B cell (primary cell): ENCODE measurements at regions of chr7 and their contacts with region 1.

Region 1: GRCh38 chr7:108569381-108570145 is at the starts of genes DNAJB9 and THAP5:
- DNase-seq: peak; percentile 100
- ATAC-seq: peak; percentile 87
- H3K4me3 ChIP-seq: peak within 1 kb of the TSS; percentile 79 to 92 (median 89)
- H3K4me3 Mint-ChIP-seq: peak within 1 kb of the TSS; percentile 96
- H3K27ac ChIP-seq: peak within 1 kb of the TSS; percentile 99 to 100
- H3K27ac Mint-ChIP-seq: peak within 1 kb of the TSS; percentile 98
- H3K4me1 ChIP-seq: peaks cover 16 to 39% of the 10 kb centered on the region in 2 donors
- H3K4me1 Mint-ChIP-seq: peaks cover 51% of the 10 kb centered on the region
- H3K27me3 ChIP-seq: no peaks in the 10 kb centered on the region
- H3K27me3 Mint-ChIP-seq: no peaks in the 10 kb centered on the region
- CTCF ChIP-seq: no peak
- total RNA-seq, gene DNAJB9: 19.5 and 21.1 TPM in 2 replicates
- total RNA-seq, gene THAP5: 48.8 and 49.0 TPM in 2 replicates

Region 2: DNA sequence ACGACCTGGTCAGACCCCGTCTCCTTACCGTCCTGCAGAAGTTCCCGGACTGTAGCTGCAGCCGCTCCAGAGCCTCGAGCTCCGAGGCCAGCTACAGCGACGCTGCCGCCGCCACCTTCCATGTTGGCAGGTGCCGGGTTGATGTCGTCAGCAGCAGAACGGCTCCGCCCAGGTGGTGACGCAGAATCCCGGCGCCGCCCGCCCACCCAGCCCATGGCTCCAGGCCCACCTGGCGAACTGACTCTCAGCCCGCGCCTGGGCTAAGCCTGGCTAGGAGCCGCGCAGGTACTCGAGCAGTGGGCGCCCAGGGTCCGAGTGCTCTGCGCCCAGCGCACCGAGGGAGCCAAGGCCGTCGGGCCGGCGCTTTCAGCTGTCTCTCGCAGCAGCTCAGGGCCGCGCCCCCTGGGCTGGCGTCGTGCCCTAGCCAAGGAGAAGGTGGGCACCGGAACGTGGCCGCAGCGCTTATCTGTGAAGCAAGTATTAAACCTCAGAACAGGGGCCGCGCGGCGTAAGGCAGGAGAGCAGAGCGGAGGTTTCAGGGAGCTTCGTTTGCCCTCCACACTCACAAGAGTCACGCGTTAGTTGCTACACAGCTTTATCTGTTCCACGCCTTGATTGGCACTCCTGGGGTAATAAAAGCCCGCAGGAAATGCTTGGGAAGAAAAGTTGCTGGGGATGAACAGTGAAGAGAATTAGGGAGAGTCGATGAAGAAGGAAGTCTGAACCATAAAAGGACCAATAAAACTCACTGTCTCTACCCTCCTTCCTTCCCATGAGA is 1005.6 kb before region 1 on chr7 and contains the starts of genes COG5 and DUS4L:
- CTCF ChIA-PET with region 1: no interaction called
- POLR2A ChIA-PET with region 1: no interaction called
- intact Hi-C with region 1: loop called (anchors 5 kb)
- DNase-seq: peak; percentile 92
- ATAC-seq: peak; percentile 93
- H3K4me3 ChIP-seq: peak within 1 kb of the TSS; percentile 86 to 98 (median 93)
- H3K4me3 Mint-ChIP-seq: peak within 1 kb of the TSS; percentile 88
- H3K27ac ChIP-seq: peak within 1 kb of the TSS; percentile 88 to 94
- H3K27ac Mint-ChIP-seq: peak within 1 kb of the TSS; percentile 94
- H3K4me1 ChIP-seq: peaks cover 18 to 23% of the 10 kb centered on the region in 2 donors
- H3K4me1 Mint-ChIP-seq: peaks cover 50% of the 10 kb centered on the region
- H3K27me3 ChIP-seq: no peaks in the 10 kb centered on the region
- H3K27me3 Mint-ChIP-seq: no peaks in the 10 kb centered on the region
- CTCF ChIP-seq: no peak
- total RNA-seq, gene COG5: 73.0 and 74.8 TPM in 2 replicates
- total RNA-seq, gene DUS4L: 17.6 and 18.7 TPM in 2 replicates

Region 3: GRCh38 chr7:107890962-107891635 is 678.5 kb before region 1 on chr7 and contains the start of gene DLD:
- CTCF ChIA-PET with region 1: no interaction called
- POLR2A ChIA-PET with region 1: no interaction called
- intact Hi-C with region 1: loop called (anchors 10 kb)
- DNase-seq: peak; percentile 95
- ATAC-seq: peak; percentile 98
- H3K4me3 ChIP-seq: peak within 1 kb of the TSS; percentile 72 to 86 (median 83)
- H3K4me3 Mint-ChIP-seq: peak within 1 kb of the TSS; percentile 99
- H3K27ac ChIP-seq: peak within 1 kb of the TSS; percentile 91 to 97
- H3K27ac Mint-ChIP-seq: peak within 1 kb of the TSS; percentile 97
- H3K4me1 ChIP-seq: peaks cover 9 to 26% of the 10 kb centered on the region in 2 donors
- H3K4me1 Mint-ChIP-seq: peaks cover 46% of the 10 kb centered on the region
- H3K27me3 ChIP-seq: no peaks in the 10 kb centered on the region
- H3K27me3 Mint-ChIP-seq: peaks cover 4% of the 10 kb centered on the region
- CTCF ChIP-seq: no peak
- total RNA-seq, gene DLD: 47.9 and 48.8 TPM in 2 replicates

Region 4: GRCh38 chr7:108415821-108416536 is 153.6 kb before region 1 on chr7:
- CTCF ChIA-PET with region 1: no interaction called
- POLR2A ChIA-PET with region 1: no interaction called
- intact Hi-C with region 1: loop called (anchors 1 kb)
- DNase-seq: peak; percentile 77
- ATAC-seq: peak; percentile 73
- H3K4me3 ChIP-seq: peak overlapping the region in 3 of 5 experiments; percentile 12 to 47 (median 27)
- H3K4me3 Mint-ChIP-seq: peak overlapping the region; percentile 81
- H3K27ac ChIP-seq: peak overlapping the region; percentile 57 to 73
- H3K27ac Mint-ChIP-seq: peak overlapping the region; percentile 85
- H3K4me1 ChIP-seq: peaks cover 43 to 56% of the 10 kb centered on the region in 2 donors
- H3K4me1 Mint-ChIP-seq: peaks cover 54% of the 10 kb centered on the region
- H3K27me3 ChIP-seq: peaks cover 0 to 27% (median 11%) of the 10 kb centered on the region in 4 experiments
- H3K27me3 Mint-ChIP-seq: peaks cover 6% of the 10 kb centered on the region
- CTCF ChIP-seq: no peak

Region 5: GRCh38 chr7:108503112-108504026 is 66.2 kb before region 1 on chr7:
- CTCF ChIA-PET with region 1: interaction called, 9 read pairs
- POLR2A ChIA-PET with region 1: interaction called, 26 read pairs
- intact Hi-C with region 1: loop called (anchors 1 kb)
- DNase-seq: peak; percentile 81
- ATAC-seq: peak; percentile 94
- H3K4me3 ChIP-seq: peak overlapping the region; percentile 29 to 51 (median 40)
- H3K4me3 Mint-ChIP-seq: peak overlapping the region; percentile 90
- H3K27ac ChIP-seq: peak overlapping the region; percentile 91 to 95
- H3K27ac Mint-ChIP-seq: peak overlapping the region; percentile 100
- H3K4me1 ChIP-seq: peaks cover 37 to 40% of the 10 kb centered on the region in 2 donors
- H3K4me1 Mint-ChIP-seq: peaks cover 51% of the 10 kb centered on the region
- H3K27me3 ChIP-seq: no peaks in the 10 kb centered on the region
- H3K27me3 Mint-ChIP-seq: no peaks in the 10 kb centered on the region
- CTCF ChIP-seq: no peak

Region 6: DNA sequence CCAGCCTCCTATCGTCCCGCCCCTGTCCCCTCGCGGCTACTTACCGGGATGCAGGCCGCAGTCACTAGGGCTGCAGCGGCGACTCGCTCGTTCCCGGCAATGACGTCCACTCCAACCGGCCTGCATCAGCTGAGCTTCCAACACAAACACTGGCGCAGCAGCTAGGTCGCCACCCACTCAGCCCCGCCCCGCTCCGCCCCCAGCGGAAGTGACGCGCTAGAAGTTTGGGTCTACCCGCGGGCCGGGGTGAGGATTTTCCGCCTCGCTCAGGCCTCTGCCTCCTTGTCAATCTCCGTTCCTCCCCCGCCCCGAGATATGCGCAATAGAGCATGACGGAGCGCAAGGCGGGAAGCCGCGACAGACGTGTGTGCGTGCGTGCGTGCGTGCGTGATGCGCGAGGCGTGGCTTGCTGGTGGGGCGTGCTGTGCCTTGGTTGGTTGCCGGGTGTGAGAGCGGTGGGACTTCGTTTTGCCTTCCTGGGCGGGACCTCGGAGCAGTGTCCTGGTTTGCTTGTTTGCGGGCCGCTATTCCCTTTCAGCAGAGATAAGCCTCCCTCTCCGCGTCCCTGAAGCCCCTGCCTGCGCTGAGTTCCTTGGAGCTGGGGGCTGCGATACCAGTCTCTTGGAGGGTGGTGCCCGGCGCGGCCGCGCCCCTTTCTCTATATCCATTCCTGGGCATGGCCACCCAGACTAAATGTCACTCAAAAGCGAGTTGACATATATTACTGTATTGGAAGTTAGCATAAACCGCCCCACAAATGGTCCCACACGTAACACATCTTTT is 43.4 kb before region 1 on chr7 and contains the start of gene PNPLA8:
- CTCF ChIA-PET with region 1: interaction called, 10 read pairs
- POLR2A ChIA-PET with region 1: interaction called, 58 read pairs
- intact Hi-C with region 1: loop called (anchors 1 kb)
- DNase-seq: peak; percentile 100
- ATAC-seq: peak; percentile 90
- H3K4me3 ChIP-seq: peak within 1 kb of the TSS; percentile 77 to 97 (median 94)
- H3K4me3 Mint-ChIP-seq: peak within 1 kb of the TSS; percentile 99
- H3K27ac ChIP-seq: peak within 1 kb of the TSS; percentile 94 to 97
- H3K27ac Mint-ChIP-seq: peak within 1 kb of the TSS; percentile 99
- H3K4me1 ChIP-seq: peaks cover 34 to 37% of the 10 kb centered on the region in 2 donors
- H3K4me1 Mint-ChIP-seq: peaks cover 46% of the 10 kb centered on the region
- H3K27me3 ChIP-seq: no peaks in the 10 kb centered on the region
- H3K27me3 Mint-ChIP-seq: no peaks in the 10 kb centered on the region
- CTCF ChIP-seq: no peak
- total RNA-seq, gene PNPLA8: 56.3 and 57.3 TPM in 2 replicates

Region 7: GRCh38 chr7:108557191-108557590 is 12.4 kb before region 1 on chr7:
- CTCF ChIA-PET with region 1: interaction called, 3 read pairs
- POLR2A ChIA-PET with region 1: interaction called, 20 read pairs
- intact Hi-C with region 1: loop called (anchors 1 kb)
- DNase-seq: no peak
- ATAC-seq: no peak
- H3K4me3 ChIP-seq: no peak overlapping the region
- H3K4me3 Mint-ChIP-seq: no peak overlapping the region
- H3K27ac ChIP-seq: no peak overlapping the region
- H3K27ac Mint-ChIP-seq: peak overlapping the region; percentile 28
- H3K4me1 ChIP-seq: peaks cover 29 to 35% of the 10 kb centered on the region in 2 donors
- H3K4me1 Mint-ChIP-seq: peaks cover 45% of the 10 kb centered on the region
- H3K27me3 ChIP-seq: no peaks in the 10 kb centered on the region
- H3K27me3 Mint-ChIP-seq: no peaks in the 10 kb centered on the region
- CTCF ChIP-seq: no peak

Region 8: GRCh38 chr7:108777966-108778365 is 208.4 kb after region 1 on chr7:
- CTCF ChIA-PET with region 1: no interaction called
- POLR2A ChIA-PET with region 1: no interaction called
- intact Hi-C with region 1: no loop called
- DNase-seq: no peak
- ATAC-seq: no peak
- H3K4me3 ChIP-seq: no peak overlapping the region
- H3K4me3 Mint-ChIP-seq: no peak overlapping the region
- H3K27ac ChIP-seq: no peak overlapping the region
- H3K27ac Mint-ChIP-seq: no peak overlapping the region
- H3K4me1 ChIP-seq: no peaks in the 10 kb centered on the region
- H3K4me1 Mint-ChIP-seq: no peaks in the 10 kb centered on the region
- H3K27me3 ChIP-seq: no peaks in the 10 kb centered on the region
- H3K27me3 Mint-ChIP-seq: no peaks in the 10 kb centered on the region
- CTCF ChIP-seq: no peak